ENCODE measurements at regions of chr1 and their contacts with region 1.

Region 1: GRCh38 chr1:17540255-17541001 is 930 bp downstream of the ARHGEF10L start:
- DNase-seq: no peak
- H3K4me3 ChIP-seq: peak overlapping the region; percentile 86
- H3K4me3 Mint-ChIP-seq: peak overlapping the region; percentile 85
- H3K27ac Mint-ChIP-seq: no peak overlapping the region
- H3K4me1 ChIP-seq: peaks cover 13% of the 10 kb centered on the region; the same call in 1 of the 2 replicates
- H3K4me1 Mint-ChIP-seq: no peaks in the 10 kb centered on the region
- H3K27me3 ChIP-seq: no peaks in the 10 kb centered on the region
- H3K27me3 Mint-ChIP-seq: no peaks in the 10 kb centered on the region
- CTCF ChIP-seq: no peak

Region 2: GRCh38 chr1:17502326-17502778 is 38.1 kb before region 1 on chr1:
- CTCF ChIA-PET with region 1: interaction called, 6 read pairs
- POLR2A ChIA-PET with region 1: no interaction called
- intact Hi-C with region 1: loop called (anchors 1 kb)
- DNase-seq: peak; percentile 68 to 80
- H3K4me3 ChIP-seq: no peak overlapping the region
- H3K4me3 Mint-ChIP-seq: no peak overlapping the region
- H3K27ac Mint-ChIP-seq: no peak overlapping the region
- H3K4me1 ChIP-seq: 0 out of 2 replicates have a peak, but pooled peaks cover 7% of the 10 kb centered on the region
- H3K4me1 Mint-ChIP-seq: peaks cover 7% of the 10 kb centered on the region
- H3K27me3 ChIP-seq: no peaks in the 10 kb centered on the region
- H3K27me3 Mint-ChIP-seq: no peaks in the 10 kb centered on the region
- CTCF ChIP-seq: peak; percentile 72 to 74

Region 3: GRCh38 chr1:17551755-17552234 is 11.4 kb after region 1 on chr1:
- CTCF ChIA-PET with region 1: no interaction called
- POLR2A ChIA-PET with region 1: no interaction called
- intact Hi-C with region 1: no loop called
- DNase-seq: no peak
- H3K4me3 ChIP-seq: no peak overlapping the region
- H3K4me3 Mint-ChIP-seq: no peak overlapping the region
- H3K27ac Mint-ChIP-seq: no peak overlapping the region
- H3K4me1 ChIP-seq: no peaks in the 10 kb centered on the region
- H3K4me1 Mint-ChIP-seq: peaks cover 11% of the 10 kb centered on the region
- H3K27me3 ChIP-seq: no peaks in the 10 kb centered on the region
- H3K27me3 Mint-ChIP-seq: no peaks in the 10 kb centered on the region
- CTCF ChIP-seq: no peak